PC-9 (cell line): ENCODE measurements at regions of chr10 and their contacts with region 1.

Region 1: DNA sequence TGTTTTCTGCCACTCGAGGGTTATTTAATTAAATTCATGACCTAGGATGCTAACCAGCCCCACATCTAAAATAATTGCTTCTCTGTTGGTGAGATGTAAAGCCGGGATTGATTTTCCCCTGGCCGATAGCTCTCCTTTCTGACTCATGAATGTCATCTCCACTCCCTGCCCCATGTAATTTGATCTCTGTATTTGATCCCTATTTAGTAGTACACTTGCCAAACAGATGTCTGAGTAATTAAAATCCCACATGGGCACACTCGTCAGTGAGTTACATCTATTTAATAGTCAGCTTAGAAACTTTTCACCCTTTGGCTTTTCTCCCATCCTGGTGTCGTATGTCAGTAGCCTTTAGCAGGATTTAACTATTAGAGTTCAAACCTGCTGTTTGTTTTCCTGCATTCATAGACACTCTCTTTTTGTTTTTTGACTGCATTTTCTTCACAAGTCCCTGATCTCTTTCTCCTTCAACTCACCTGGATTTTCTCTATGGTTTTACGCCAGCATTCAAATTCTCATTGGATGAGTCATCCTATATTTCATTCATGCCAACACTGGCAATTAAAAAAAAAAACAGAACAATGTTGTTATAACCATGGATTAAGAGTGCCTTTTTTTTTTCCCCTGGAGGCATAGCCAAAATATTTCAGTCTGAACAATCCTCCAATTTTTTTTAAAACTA is 82.7 kb downstream of the SPAG6 start:
- DNase-seq: peak; percentile 42 to 93
- H3K4me3 ChIP-seq: peak overlapping the region; percentile 48; the same call in 1 of the 2 replicates
- H3K27ac ChIP-seq: peak overlapping the region; percentile 92
- H3K4me1 ChIP-seq: peaks cover 57% of the 10 kb centered on the region
- H3K27me3 ChIP-seq: no peaks in the 10 kb centered on the region
- CTCF ChIP-seq: no peak

Region 2: DNA sequence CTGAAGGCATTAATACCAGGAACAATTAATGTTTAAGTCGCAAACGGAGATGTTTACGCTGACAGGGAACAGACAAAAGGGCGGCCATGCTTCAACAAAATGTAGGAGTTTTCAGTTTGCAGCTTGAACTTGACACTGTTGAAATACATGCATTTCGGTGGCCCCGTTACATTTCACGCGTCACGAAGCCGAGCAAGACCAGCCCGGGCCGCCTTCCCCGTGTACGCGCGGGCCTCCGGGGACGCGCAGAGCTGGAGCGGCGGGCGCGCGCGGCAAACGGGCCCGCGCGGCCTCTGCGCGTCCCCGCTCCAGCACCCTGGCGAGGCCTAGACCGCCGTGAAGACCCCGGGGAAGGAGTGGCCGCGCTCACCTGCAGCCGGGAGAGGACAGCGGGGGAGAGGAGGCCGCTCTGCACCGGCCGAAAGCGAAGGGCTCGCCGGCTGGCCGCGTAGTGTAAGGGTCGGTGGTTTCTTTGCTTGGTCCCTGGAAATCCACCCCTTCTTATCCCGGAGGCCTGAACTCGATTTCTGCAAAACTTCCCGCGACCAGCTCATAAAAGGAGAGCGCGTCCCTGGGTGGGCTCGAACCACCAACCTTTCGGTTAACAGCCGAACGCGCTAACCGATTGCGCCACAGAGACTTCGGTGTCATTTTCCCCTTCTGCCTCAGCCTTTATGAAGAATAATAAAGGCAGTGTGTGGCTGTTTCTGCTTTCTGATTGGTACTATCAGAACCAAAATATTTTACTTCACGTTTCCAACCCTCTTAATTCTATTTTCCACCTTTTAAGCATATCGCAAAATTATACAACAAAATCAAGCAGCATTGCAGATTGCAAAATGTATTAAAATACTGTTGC is 198.9 kb before region 1 on chr10:
- CTCF ChIA-PET with region 1: no interaction called
- POLR2A ChIA-PET with region 1: no interaction called
- intact Hi-C with region 1: loop called (anchors 5 kb)
- DNase-seq: peak; percentile 61 to 88
- H3K4me3 ChIP-seq: peak overlapping the region; percentile 82
- H3K27ac ChIP-seq: 0 out of 2 replicates have a peak overlapping the region, but pooled peaks have one; percentile 5
- H3K4me1 ChIP-seq: peaks cover 12% of the 10 kb centered on the region
- H3K27me3 ChIP-seq: no peaks in the 10 kb centered on the region
- CTCF ChIP-seq: no peak

Region 3: DNA sequence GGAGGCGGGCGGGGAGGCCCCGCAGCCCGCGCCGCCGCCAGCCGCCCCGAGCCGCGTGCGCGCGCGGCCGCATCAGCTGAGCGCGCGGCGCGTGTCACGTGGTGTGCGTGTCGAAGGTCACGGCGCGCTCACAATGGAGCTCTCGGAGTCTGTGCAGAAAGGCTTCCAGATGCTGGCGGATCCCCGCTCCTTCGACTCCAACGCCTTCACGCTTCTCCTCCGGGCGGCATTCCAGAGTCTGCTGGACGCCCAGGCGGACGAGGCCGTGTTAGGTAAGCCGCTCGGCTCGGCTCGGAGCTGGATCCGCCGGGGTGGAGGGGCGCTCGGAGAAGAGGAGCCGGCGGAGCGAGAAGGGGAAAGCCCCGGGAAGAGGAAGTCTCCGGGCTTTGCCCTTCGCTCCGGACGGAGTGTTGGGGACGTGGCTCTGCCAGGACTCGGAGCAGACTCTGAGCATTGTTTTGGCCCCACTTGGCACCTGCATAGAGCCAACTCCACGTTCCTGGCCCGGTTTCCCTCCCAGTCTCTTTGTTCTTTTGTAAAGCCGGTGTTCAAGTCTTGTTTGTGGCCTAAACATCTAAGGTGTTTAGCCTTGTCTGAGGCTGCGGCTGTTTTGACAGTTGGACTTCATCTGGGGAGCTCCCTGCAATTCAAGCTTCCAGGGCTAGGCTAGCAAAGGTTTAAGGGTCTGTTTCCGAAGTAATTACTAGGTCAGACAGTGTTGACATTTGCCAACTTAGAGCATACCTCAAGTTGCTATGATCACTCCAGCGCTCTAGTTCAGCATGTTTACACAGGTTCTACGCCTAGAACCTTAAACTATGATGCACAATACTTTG is 111.5 kb before region 1 on chr10 and contains the start of gene COMMD3:
- CTCF ChIA-PET with region 1: no interaction called
- POLR2A ChIA-PET with region 1: no interaction called
- intact Hi-C with region 1: loop called (anchors 2 kb)
- DNase-seq: peak; percentile 55 to 77
- H3K4me3 ChIP-seq: peak within 1 kb of the TSS; percentile 67
- H3K27ac ChIP-seq: peak within 1 kb of the TSS; percentile 58
- H3K4me1 ChIP-seq: peaks cover 29% of the 10 kb centered on the region
- H3K27me3 ChIP-seq: no peaks in the 10 kb centered on the region
- CTCF ChIP-seq: no peak
- total RNA-seq, gene COMMD3: 38.1 and 43.5 TPM in 2 replicates

Region 4: GRCh38 chr10:22630234-22631174 is 202.5 kb after region 1 on chr10:
- CTCF ChIA-PET with region 1: no interaction called
- POLR2A ChIA-PET with region 1: no interaction called
- intact Hi-C with region 1: loop called (anchors 5 kb)
- DNase-seq: no peak
- H3K4me3 ChIP-seq: no peak overlapping the region
- H3K27ac ChIP-seq: no peak overlapping the region
- H3K4me1 ChIP-seq: peaks cover 7% of the 10 kb centered on the region
- H3K27me3 ChIP-seq: no peaks in the 10 kb centered on the region
- CTCF ChIP-seq: no peak

Region 5: GRCh38 chr10:22823109-22823508 is 395.1 kb after region 1 on chr10:
- CTCF ChIA-PET with region 1: no interaction called
- POLR2A ChIA-PET with region 1: no interaction called
- intact Hi-C with region 1: loop called (anchors 1 kb)
- DNase-seq: peak; percentile 53 to 88
- H3K4me3 ChIP-seq: no peak overlapping the region
- H3K27ac ChIP-seq: peak overlapping the region; percentile 82
- H3K4me1 ChIP-seq: peaks cover 25% of the 10 kb centered on the region
- H3K27me3 ChIP-seq: no peaks in the 10 kb centered on the region
- CTCF ChIP-seq: no peak

Region 6: DNA sequence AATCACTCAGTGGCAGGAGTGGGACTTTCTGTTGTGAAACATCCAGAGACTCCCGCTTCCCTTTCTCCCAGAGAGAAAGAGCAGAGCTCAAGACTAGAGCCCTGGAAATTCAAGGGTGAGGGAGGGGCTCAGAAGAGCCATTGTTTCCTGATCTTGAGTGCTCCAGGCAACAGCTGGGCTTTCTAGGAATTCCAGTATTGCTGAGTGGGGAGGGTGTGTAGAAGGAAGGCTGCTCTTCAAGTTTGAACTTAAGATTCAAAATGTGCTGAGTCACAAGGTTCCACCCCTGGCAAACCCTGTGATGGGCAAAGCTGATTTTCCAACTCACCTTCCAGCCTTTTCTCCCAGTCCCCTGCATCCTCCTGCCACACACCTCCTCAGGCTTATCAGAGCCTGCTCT is 625.0 kb after region 1 on chr10:
- CTCF ChIA-PET with region 1: no interaction called
- POLR2A ChIA-PET with region 1: no interaction called
- intact Hi-C with region 1: loop called (anchors 2 kb)
- DNase-seq: peak; percentile 72 to 78
- H3K4me3 ChIP-seq: no peak overlapping the region
- H3K27ac ChIP-seq: peak overlapping the region; percentile 54
- H3K4me1 ChIP-seq: peaks cover 32% of the 10 kb centered on the region
- H3K27me3 ChIP-seq: no peaks in the 10 kb centered on the region
- CTCF ChIP-seq: no peak